ENCODE measurements at regions of chr12 and their contacts with region 1.

Region 1: DNA sequence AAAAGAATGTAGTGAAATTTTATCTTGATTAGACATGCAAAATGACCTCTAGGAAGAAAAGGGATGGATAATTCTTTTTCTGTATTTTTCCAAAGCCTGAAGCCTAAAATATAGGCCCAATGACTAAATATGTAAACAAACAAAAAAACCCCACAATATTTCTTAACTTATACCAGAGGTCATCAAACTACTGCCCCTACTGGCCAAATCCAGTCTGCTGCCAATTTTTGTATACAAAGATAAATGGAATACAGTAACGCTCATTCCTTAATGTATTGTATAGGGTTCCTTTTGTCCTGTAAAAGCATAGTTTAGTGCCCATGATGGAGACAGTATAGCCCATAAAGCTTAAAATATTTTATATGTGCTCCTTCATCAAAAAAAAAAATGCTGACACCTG is 145.7 kb upstream of the ALG10 start:
- DNase-seq: no peak
- H3K4me3 ChIP-seq: no peak overlapping the region
- H3K27ac ChIP-seq: no peak overlapping the region
- H3K4me1 ChIP-seq: no peaks in the 10 kb centered on the region
- H3K27me3 ChIP-seq: no peaks in the 10 kb centered on the region
- CTCF ChIP-seq: peak in 2 of 3 experiments; percentile 3 to 42; a peak in 2 of 4 replicates
- EP300 ChIP-seq: no peak
- POLR2A ChIP-seq: no peak
- RAD21 ChIP-seq: peak in 1 of 2 experiments; percentile 21; a peak in 3 of 4 replicates

Region 2: DNA sequence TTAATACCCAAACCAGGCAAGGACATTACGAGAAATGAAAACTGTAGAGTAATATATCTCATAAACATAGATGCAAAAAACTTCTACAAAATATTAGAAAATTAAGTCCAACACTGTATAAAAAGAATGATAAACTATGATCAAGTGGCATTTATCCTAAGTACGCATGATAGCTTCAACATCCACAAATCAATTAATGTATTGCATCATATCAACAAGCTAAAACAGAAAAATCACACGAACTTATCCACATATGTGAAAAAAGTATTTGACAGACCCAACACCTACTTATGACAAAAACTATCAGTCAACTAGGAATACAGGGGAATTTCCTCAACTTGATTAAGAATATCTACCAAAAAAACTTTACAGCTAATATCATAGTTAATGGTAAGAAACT is 15.8 kb after region 1 on chr12:
- CTCF ChIA-PET with region 1: interaction called, 12 read pairs
- POLR2A ChIA-PET with region 1: no interaction called
- DNase-seq: no peak
- H3K4me3 ChIP-seq: no peak overlapping the region
- H3K27ac ChIP-seq: no peak overlapping the region
- H3K4me1 ChIP-seq: no peaks in the 10 kb centered on the region
- H3K27me3 ChIP-seq: no peaks in the 10 kb centered on the region
- CTCF ChIP-seq: no peak
- EP300 ChIP-seq: no peak
- POLR2A ChIP-seq: no peak
- RAD21 ChIP-seq: no peak

Measured in H1 (cell line).